ENCODE measurements at regions of chr9 and their contacts with region 1.

Region 1: DNA sequence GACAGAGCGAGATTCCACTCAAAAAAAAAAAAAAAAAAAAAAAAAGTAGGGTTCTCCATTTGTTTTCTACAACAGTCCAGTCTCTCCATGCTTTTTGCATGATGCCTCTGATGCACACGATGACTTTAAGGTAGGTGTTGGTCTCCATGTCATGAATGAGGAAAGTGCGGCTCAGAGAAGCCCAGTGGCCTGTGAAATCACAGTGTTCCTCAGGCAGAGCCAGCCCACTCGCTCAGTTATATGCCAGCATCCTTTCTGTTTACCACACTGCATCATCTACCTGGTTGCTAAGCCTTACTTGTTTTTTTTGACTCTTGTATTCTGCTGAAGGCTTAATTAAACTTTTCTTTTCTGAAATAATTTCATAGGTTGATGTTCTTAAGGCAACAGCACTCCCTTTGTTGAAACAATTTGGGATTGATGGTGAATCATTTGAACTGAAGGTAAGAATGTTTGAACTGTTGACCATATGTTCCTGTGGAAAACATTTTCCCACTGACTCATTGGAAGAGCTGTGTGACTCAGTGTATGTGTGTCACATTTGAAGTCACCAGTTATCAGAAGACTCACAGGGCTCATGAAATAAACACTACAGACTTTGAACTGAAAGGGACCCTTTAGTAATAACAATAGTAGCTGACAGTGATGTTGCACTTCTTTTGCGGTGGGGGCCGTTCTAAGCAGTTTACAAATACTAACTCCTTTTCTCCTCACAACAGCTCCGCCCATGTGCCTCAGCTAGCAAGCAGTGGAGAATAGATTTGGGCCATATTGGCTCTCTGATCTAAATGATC is 40.2 kb downstream of the RCL1 start:
- DNase-seq: peak; percentile 48
- H3K4me3 Mint-ChIP-seq: peak overlapping the region; percentile 53
- H3K27ac Mint-ChIP-seq: peak overlapping the region; percentile 96
- H3K4me1 Mint-ChIP-seq: peaks cover 60% of the 10 kb centered on the region
- H3K27me3 Mint-ChIP-seq: no peaks in the 10 kb centered on the region

Region 2: GRCh38 chr9:3875364-3876132 is 957.4 kb before region 1 on chr9:
- intact Hi-C with region 1: no loop called
- DNase-seq: no peak
- H3K4me3 Mint-ChIP-seq: no peak overlapping the region
- H3K27ac Mint-ChIP-seq: peak overlapping the region; percentile 60
- H3K4me1 Mint-ChIP-seq: peaks cover 5% of the 10 kb centered on the region
- H3K27me3 Mint-ChIP-seq: no peaks in the 10 kb centered on the region

Region 3: DNA sequence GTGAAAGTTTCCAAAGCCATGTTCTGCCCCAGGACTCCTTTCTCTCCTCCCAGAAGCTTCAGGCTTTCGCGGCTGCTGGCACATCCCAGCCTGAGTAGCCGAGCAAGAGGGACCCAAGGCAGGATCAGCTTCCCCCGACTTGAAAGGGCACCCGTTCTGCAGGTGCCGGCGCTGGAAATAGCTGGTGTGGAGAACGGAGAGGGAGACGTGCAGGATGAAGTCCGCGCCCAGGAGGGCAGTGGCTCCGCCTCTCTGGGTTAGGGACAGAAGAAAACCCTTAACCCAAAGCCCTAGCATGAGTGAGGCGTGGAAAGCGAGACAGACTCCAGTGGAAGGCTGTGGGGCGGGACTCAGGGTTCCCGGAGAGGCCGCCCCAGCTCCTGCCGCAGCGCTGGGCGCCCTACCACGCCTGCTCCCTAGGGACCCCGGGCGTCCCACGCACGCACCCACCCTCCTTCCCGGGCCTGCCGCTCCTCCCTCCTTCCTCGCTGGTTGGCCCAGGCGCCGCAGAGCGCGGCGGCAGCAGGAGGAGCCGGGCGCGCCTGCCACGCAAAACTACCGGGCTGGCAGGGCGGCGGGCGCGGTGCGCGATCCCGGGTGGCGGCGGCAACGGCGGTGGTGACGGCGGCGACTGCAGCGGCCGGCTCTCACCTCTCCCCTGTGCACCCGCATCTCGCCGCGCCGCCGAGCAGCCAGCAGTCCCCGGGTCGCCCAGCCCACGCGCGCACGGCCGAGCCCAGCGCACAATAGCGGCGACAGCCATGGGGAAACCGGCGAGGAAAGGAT is 342.9 kb before region 1 on chr9 and contains the start of gene SLC1A1:
- intact Hi-C with region 1: no loop called
- DNase-seq: no peak
- H3K4me3 Mint-ChIP-seq: peak within 1 kb of the TSS; percentile 84
- H3K27ac Mint-ChIP-seq: no peak within 1 kb of the TSS
- H3K4me1 Mint-ChIP-seq: peaks cover 19% of the 10 kb centered on the region
- H3K27me3 Mint-ChIP-seq: peaks cover 48% of the 10 kb centered on the region
- total RNA-seq, gene SLC1A1: 0.05 TPM in 1 of 2 replicates, not detected in the other

Region 4: DNA sequence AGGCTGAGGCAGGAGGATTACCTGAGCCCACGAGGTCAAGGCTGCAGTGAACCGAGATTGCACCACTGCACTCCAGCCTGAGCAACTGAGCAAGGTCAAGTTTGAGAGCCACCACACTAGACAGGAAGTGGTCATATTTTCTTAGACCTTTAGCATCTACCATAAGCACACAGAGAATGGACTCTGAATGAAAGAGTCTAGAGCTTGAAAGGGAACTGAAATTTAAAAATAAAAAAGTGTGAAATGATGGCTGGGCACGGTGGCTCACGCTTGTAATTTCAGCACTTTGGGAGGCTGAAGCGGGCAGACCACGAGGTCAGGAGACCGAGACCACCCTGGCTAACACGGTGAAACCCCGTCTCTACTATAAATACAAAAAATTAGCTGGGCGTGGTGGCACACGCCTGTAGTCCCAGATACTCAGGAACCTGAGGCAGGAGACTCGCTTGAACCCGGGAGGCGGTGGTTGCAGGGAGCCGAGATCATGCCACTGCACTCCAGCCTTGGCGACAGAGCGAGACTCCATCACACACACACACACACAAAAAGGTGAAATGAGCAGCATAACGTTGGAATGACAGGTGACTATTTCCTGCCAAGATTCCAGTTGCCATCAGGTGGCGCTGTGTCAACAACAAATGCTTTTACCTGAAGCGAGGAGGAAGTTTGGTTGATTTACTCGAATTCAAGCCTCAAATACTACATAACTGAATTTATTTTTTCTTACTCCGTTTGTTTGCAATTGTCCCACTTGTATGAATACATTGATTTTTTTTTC is 70.7 kb before region 1 on chr9:
- intact Hi-C with region 1: loop called (anchors 2 kb)
- DNase-seq: peak; percentile 72
- H3K4me3 Mint-ChIP-seq: peak overlapping the region; percentile 68
- H3K27ac Mint-ChIP-seq: peak overlapping the region; percentile 65
- H3K4me1 Mint-ChIP-seq: peaks cover 18% of the 10 kb centered on the region
- H3K27me3 Mint-ChIP-seq: no peaks in the 10 kb centered on the region

Region 5: GRCh38 chr9:4855841-4856240 is 22.9 kb after region 1 on chr9:
- intact Hi-C with region 1: loop called (anchors 2 kb)
- DNase-seq: no peak
- H3K4me3 Mint-ChIP-seq: no peak overlapping the region
- H3K27ac Mint-ChIP-seq: no peak overlapping the region
- H3K4me1 Mint-ChIP-seq: peaks cover 33% of the 10 kb centered on the region
- H3K27me3 Mint-ChIP-seq: no peaks in the 10 kb centered on the region

Region 6: GRCh38 chr9:4939118-4939561 is 106.2 kb after region 1 on chr9:
- intact Hi-C with region 1: loop called (anchors 1 kb)
- DNase-seq: peak; percentile 33
- H3K4me3 Mint-ChIP-seq: peak overlapping the region; percentile 5
- H3K27ac Mint-ChIP-seq: peak overlapping the region; percentile 74
- H3K4me1 Mint-ChIP-seq: peaks cover 75% of the 10 kb centered on the region
- H3K27me3 Mint-ChIP-seq: no peaks in the 10 kb centered on the region

Region 7: GRCh38 chr9:5510360-5510931 is 677.5 kb after region 1 on chr9 and contains the start of gene PDCD1LG2:
- intact Hi-C with region 1: loop called (anchors 1 kb)
- DNase-seq: peak; percentile 41
- H3K4me3 Mint-ChIP-seq: peak within 1 kb of the TSS; percentile 82
- H3K27ac Mint-ChIP-seq: peak within 1 kb of the TSS; percentile 96
- H3K4me1 Mint-ChIP-seq: peaks cover 68% of the 10 kb centered on the region
- H3K27me3 Mint-ChIP-seq: no peaks in the 10 kb centered on the region
- total RNA-seq, gene PDCD1LG2: 1.1 and 1.4 TPM in 2 replicates